ENCODE measurements at regions of chr1 and their contacts with region 1.

Region 1: GRCh38 chr1:99623554-99623953 is 22.4 kb upstream of the PALMD start:
- DNase-seq: no peak
- ATAC-seq: no peak
- H3K4me3 ChIP-seq: no peak overlapping the region
- H3K27ac ChIP-seq: no peak overlapping the region
- H3K4me1 ChIP-seq: no peaks in the 10 kb centered on the region
- H3K27me3 ChIP-seq: no peaks in the 10 kb centered on the region
- CTCF ChIP-seq: no peak

Region 2: DNA sequence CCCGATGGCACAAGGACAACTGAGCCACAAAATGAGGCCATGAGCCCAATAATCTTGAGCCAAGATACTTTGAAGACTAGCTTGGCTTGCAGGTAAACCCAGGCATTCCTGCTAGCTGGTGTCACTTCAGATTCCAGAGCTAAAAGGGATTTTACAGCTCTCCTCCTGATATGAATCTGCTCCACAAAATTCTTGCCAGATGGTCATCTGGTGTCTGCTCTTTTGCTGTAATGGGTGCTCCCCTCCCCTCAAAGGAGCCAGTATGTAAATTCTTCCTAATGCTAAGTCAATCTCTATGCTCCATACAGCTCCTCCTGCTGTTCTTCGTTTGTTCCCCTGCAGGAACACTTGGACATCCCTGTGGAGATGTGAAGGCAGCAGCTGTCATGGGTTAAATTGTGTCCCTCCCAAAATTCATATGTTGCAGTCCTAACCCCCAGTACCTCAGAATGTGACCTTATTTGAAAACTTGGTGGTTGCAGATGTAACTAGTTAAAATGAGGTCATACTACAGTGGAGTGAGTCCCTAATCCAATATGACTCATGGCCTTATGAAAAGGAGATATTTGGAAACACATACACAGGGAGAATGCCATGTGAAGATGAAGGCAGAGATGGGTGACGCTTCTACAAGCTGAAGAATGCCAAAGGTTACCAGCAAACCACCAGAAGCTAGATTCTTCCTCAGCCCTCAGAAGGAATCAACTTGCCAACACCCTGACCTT is 158.2 kb before region 1 on chr1:
- CTCF ChIA-PET with region 1: no interaction called
- POLR2A ChIA-PET with region 1: interaction called, 15 read pairs
- intact Hi-C with region 1: no loop called
- DNase-seq: peak; percentile 70
- ATAC-seq: peak; percentile 85
- H3K4me3 ChIP-seq: no peak overlapping the region
- H3K27ac ChIP-seq: peak overlapping the region; percentile 80
- H3K4me1 ChIP-seq: peaks cover 16% of the 10 kb centered on the region
- H3K27me3 ChIP-seq: no peaks in the 10 kb centered on the region
- CTCF ChIP-seq: no peak

Region 3: GRCh38 chr1:99869304-99869703 is 245.8 kb after region 1 on chr1:
- CTCF ChIA-PET with region 1: no interaction called
- POLR2A ChIA-PET with region 1: no interaction called
- intact Hi-C with region 1: no loop called
- DNase-seq: no peak
- ATAC-seq: peak; percentile 89
- H3K4me3 ChIP-seq: no peak overlapping the region
- H3K27ac ChIP-seq: no peak overlapping the region
- H3K4me1 ChIP-seq: peaks cover 8% of the 10 kb centered on the region; the same call in 1 of the 2 replicates
- H3K27me3 ChIP-seq: no peaks in the 10 kb centered on the region
- CTCF ChIP-seq: no peak

Measured in PC-3 (cell line).